Panc1 (cell line): ENCODE measurements at regions of chr11 and their contacts with region 1.

Region 1: GRCh38 chr11:62479631-62480201 is 60.9 kb downstream of the SCGB1A1 start:
- DNase-seq: no peak
- ATAC-seq: no peak
- H3K4me3 ChIP-seq: no peak overlapping the region
- H3K27ac ChIP-seq: peak overlapping the region; percentile 82
- H3K4me1 ChIP-seq: peaks cover 17% of the 10 kb centered on the region
- H3K27me3 ChIP-seq: no peaks in the 10 kb centered on the region
- CTCF ChIP-seq: no peak

Region 2: GRCh38 chr11:62490391-62490790 is 10.7 kb after region 1 on chr11:
- CTCF ChIA-PET with region 1: interaction called, 10 read pairs
- POLR2A ChIA-PET with region 1: interaction called, 3 read pairs
- in situ Hi-C with region 1: no loop called
- intact Hi-C with region 1: no loop called
- DNase-seq: no peak
- ATAC-seq: no peak
- H3K4me3 ChIP-seq: no peak overlapping the region
- H3K27ac ChIP-seq: peak overlapping the region; percentile 52; the same call in 1 of the 2 replicates
- H3K4me1 ChIP-seq: no peaks in the 10 kb centered on the region
- H3K27me3 ChIP-seq: no peaks in the 10 kb centered on the region
- CTCF ChIP-seq: no peak

Region 3: DNA sequence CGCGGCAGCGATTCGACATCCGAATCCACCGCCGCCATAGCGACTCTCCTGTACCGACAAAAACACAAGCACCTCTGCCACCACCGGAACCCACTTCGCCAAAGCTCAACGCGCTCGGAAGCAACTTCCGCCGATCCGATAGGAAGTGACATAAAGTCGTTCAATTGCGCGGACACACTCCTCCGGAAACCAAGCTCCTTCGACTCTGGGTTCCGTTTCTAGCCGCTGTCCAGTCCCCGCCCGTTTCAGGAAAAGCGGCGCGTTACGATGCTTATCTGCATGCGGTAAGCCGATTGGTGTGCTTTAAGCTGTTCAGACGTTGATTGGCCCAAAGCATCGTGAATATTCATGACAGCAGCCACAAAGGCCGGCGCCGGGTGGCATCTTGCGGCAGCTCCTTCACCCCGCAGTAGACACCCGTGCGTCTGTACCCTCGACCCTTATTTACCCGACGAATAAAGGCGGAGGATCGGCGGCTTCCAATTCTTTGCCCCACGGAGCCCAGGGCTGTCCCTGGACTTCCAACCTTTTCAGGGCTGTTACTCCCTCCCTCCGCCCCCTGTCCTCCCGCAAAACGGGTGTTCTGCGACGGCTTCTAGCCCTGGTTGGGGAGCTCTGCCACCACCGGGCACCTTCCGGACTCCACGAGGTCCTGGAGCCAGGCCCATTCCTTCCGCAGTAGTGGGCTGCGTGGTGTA is 111.9 kb after region 1 on chr11 and contains the start of gene TUT1:
- CTCF ChIA-PET with region 1: no interaction called
- POLR2A ChIA-PET with region 1: interaction called, 20 read pairs
- in situ Hi-C with region 1: no loop called
- intact Hi-C with region 1: no loop called
- DNase-seq: peak; percentile 95
- ATAC-seq: peak; percentile 94
- H3K4me3 ChIP-seq: peak within 1 kb of the TSS; percentile 74 to 86
- H3K27ac ChIP-seq: peak within 1 kb of the TSS; percentile 97
- H3K4me1 ChIP-seq: peaks cover 24% of the 10 kb centered on the region
- H3K27me3 ChIP-seq: no peaks in the 10 kb centered on the region
- CTCF ChIP-seq: no peak
- total RNA-seq, gene TUT1: 19.9 TPM

Region 4: GRCh38 chr11:62771144-62772021 is 291.7 kb after region 1 on chr11 and contains the start of gene TAF6L:
- CTCF ChIA-PET with region 1: no interaction called
- POLR2A ChIA-PET with region 1: no interaction called
- in situ Hi-C with region 1: no loop called
- intact Hi-C with region 1: no loop called
- DNase-seq: peak; percentile 78
- ATAC-seq: peak; percentile 97
- H3K4me3 ChIP-seq: peak within 1 kb of the TSS; percentile 72 to 73
- H3K27ac ChIP-seq: peak within 1 kb of the TSS; percentile 95
- H3K4me1 ChIP-seq: peaks cover 8% of the 10 kb centered on the region
- H3K27me3 ChIP-seq: no peaks in the 10 kb centered on the region
- CTCF ChIP-seq: no peak
- total RNA-seq, gene TAF6L: 32.6 TPM

Region 5: GRCh38 chr11:63909591-63910506 is 1430.1 kb after region 1 on chr11:
- CTCF ChIA-PET with region 1: no interaction called
- POLR2A ChIA-PET with region 1: interaction called, 10 read pairs
- in situ Hi-C with region 1: no loop called
- intact Hi-C with region 1: no loop called
- DNase-seq: no peak
- ATAC-seq: peak; percentile 32; the same call in 1 of the 2 replicates
- H3K4me3 ChIP-seq: no peak overlapping the region
- H3K27ac ChIP-seq: no peak overlapping the region
- H3K4me1 ChIP-seq: peaks cover 9% of the 10 kb centered on the region
- H3K27me3 ChIP-seq: no peaks in the 10 kb centered on the region
- CTCF ChIP-seq: no peak